Aorta (tissue), 5 donors: ENCODE measurements at regions of chr4 and their contacts with region 1.

Region 1: GRCh38 chr4:88591787-88592599 is at the start of gene HERC3:
- DNase-seq: peak; percentile 95 to 97
- ATAC-seq: peak; percentile 100
- H3K4me3 ChIP-seq: peak within 1 kb of the TSS; percentile 60 to 86
- H3K27ac ChIP-seq: peak within 1 kb of the TSS; percentile 87 to 91
- H3K4me1 ChIP-seq: no peaks in the 10 kb centered on the region
- H3K27me3 ChIP-seq: no peaks in the 10 kb centered on the region
- total RNA-seq, gene HERC3: 34.4 to 46.2 TPM

Region 2: DNA sequence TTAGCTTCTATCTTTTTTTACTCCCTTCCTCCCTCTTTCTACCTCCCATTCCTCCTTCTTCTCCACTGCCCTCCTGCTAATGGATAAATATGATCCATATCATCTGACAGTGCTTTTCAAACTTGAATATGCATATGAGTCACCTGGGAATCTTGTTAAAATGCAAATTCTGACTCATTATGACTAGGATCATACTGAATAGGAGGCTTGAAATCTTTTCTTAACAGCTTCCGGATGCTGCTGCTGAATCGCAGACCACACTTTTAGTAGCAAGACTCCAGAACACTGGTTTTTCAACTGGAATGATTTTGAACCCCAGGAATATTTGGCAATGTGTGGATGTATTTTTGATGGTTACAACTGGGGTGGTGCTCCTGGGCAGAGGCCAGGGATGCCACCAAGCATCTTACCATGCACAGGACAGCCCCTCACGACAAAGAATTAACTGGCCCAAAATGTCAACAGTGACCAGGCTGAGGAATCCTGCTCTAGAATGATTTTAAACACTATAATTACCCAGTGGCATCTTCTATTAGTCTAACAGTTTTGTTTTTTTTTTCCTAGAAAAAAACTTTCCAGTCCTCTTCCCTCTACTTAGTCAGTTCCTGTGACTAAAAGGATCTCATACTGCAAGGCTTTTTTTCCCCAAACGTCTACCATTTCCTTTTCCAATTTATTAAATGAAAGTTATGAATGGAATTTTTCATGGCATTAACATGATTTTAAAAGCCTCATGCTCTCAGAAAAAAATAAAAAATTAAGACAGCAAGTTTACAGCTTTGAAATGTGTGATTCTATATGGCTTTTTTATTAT is 57.8 kb before region 1 on chr4:
- intact Hi-C with region 1: loop called in 1 of 2 experiments (anchors 5 kb)
- DNase-seq: no peak
- ATAC-seq: no peak
- H3K4me3 ChIP-seq: no peak overlapping the region
- H3K27ac ChIP-seq: no peak overlapping the region
- H3K4me1 ChIP-seq: no peaks in the 10 kb centered on the region
- H3K27me3 ChIP-seq: no peaks in the 10 kb centered on the region

Region 3: GRCh38 chr4:88659055-88659889 is 67.3 kb after region 1 on chr4:
- intact Hi-C with region 1: loop called (anchors 2 to 5 kb)
- DNase-seq: peak in 1 of 2 donors; percentile 49
- ATAC-seq: peak; percentile 87
- H3K4me3 ChIP-seq: no peak overlapping the region
- H3K27ac ChIP-seq: peak overlapping the region in 1 of 2 donors; percentile 68
- H3K4me1 ChIP-seq: peaks cover 0 to 3% of the 10 kb centered on the region in 2 donors
- H3K27me3 ChIP-seq: no peaks in the 10 kb centered on the region

Region 4: DNA sequence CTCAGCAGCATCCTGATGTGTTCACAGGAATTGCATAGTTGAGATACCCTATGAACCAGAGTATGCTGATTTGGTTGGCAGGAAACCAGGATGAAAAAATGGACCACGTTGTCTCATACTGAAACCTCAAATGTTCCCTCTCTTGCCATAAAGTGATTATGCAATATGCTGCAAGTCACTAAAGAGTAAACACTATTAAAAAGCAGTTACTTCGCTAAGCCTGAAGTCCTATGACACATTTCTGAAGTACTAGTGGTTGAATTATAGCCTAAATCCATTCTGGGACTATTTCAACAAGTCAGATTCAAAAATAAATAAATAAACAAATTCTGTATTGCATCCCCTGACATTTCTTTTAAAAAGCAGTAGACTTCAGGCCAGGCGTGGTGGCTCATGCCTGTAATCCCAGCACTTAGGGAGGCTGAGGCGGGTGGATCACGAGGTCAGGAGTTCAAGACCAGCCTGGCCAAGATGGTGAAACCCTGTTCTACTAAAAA is 211.7 kb after region 1 on chr4:
- intact Hi-C with region 1: no loop called
- DNase-seq: no peak
- ATAC-seq: peak; percentile 74
- H3K4me3 ChIP-seq: no peak overlapping the region
- H3K27ac ChIP-seq: no peak overlapping the region
- H3K4me1 ChIP-seq: peaks cover 2 to 7% of the 10 kb centered on the region in 2 donors
- H3K27me3 ChIP-seq: no peaks in the 10 kb centered on the region

Region 5: DNA sequence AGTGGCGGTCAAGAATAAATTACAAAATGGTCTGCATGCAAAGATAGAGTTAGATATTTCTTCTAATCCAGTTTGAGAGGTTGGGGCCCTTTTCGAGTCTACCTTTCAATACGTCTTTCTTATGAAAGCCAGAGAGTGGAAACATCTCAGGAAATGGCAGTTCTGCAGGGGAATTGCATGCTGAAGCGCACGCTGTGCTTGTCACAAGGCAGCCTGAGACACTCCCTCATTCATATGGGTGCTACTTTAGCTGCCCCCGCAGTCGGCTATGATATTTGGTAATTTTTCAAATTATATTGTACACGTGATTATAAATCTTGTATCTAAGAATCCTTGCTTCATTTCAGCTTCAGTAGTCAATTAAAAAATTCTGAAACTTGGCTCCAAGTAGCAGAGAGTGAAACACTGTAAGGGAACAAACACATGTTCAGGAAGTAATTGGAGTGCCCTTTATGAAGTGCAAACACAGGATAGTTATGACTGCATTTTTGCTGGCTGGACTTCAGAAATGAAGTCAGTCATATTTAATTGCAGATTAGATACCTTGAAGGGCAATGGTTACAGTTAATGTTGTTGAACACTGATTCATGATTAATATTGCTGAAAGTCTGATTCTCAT is 251.2 kb after region 1 on chr4:
- intact Hi-C with region 1: no loop called
- DNase-seq: no peak
- ATAC-seq: no peak
- H3K4me3 ChIP-seq: no peak overlapping the region
- H3K27ac ChIP-seq: no peak overlapping the region
- H3K4me1 ChIP-seq: no peaks in the 10 kb centered on the region
- H3K27me3 ChIP-seq: no peaks in the 10 kb centered on the region